Naive thymus-derived CD4-positive, alpha-beta T cell (primary cell): ENCODE measurements at regions of chr19 and their contacts with region 1.

Region 1: GRCh38 chr19:662962-663681 is at the start of gene RNF126:
- DNase-seq: peak; percentile 83 to 92 (median 88)
- ATAC-seq: peak; percentile 78
- H3K4me3 ChIP-seq: peak within 1 kb of the TSS; percentile 92
- H3K4me3 Mint-ChIP-seq: peak within 1 kb of the TSS; percentile 95 to 99 (median 98)
- H3K27ac ChIP-seq: peak within 1 kb of the TSS; percentile 96
- H3K27ac Mint-ChIP-seq: peak within 1 kb of the TSS; percentile 93 to 98 (median 97)
- H3K4me1 ChIP-seq: peaks cover 27 to 30% of the 10 kb centered on the region in 2 donors
- H3K4me1 Mint-ChIP-seq: peaks cover 20 to 40% (median 32%) of the 10 kb centered on the region in 7 donors
- H3K27me3 ChIP-seq: no peaks in the 10 kb centered on the region
- H3K27me3 Mint-ChIP-seq: peaks cover 0 to 2% (median 0%) of the 10 kb centered on the region in 5 donors
- total RNA-seq, gene RNF126: 75.1 to 110 (median 101) TPM

Region 2: DNA sequence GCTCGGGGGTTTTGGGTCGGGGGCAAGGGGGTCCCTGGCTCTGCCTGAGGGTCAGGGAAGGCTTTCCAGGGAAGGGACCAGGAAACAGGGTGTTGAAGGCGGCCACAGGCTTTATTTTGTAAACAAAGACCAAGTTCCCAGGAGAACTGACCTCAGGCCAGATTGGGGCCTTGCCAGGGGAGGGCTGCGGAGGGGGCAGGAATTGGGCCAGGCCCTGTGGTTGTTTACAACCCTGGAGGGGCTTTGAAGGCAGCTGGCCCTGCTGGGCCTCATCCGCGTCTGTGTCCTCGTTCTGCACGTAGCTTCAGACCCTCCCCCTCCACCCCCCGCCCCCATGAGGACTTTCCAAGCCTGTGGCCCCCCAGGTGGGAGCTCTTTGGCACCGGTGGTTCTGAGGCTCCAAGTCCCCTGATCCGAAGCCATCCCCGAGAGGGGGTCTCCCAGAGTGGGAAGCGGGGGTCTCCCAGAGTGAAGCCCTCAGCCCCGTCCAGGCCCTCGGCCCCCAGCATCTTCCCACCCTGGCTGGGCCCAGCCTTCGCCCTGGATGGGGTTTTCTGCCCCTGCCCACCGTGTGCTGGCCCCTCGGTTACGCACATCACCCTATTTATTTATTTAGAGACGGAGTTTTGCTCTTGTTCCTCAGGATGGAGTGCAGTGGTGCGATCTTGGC is 104.2 kb before region 1 on chr19:
- CTCF ChIA-PET with region 1: no interaction called
- POLR2A ChIA-PET with region 1: no interaction called
- intact Hi-C with region 1: no loop called
- DNase-seq: no peak
- ATAC-seq: no peak
- H3K4me3 ChIP-seq: no peak overlapping the region
- H3K4me3 Mint-ChIP-seq: no peak overlapping the region
- H3K27ac ChIP-seq: no peak overlapping the region
- H3K27ac Mint-ChIP-seq: no peak overlapping the region
- H3K4me1 ChIP-seq: no peaks in the 10 kb centered on the region
- H3K4me1 Mint-ChIP-seq: peaks cover 0 to 4% (median 0%) of the 10 kb centered on the region in 7 donors
- H3K27me3 ChIP-seq: no peaks in the 10 kb centered on the region
- H3K27me3 Mint-ChIP-seq: no peaks in the 10 kb centered on the region

Region 3: DNA sequence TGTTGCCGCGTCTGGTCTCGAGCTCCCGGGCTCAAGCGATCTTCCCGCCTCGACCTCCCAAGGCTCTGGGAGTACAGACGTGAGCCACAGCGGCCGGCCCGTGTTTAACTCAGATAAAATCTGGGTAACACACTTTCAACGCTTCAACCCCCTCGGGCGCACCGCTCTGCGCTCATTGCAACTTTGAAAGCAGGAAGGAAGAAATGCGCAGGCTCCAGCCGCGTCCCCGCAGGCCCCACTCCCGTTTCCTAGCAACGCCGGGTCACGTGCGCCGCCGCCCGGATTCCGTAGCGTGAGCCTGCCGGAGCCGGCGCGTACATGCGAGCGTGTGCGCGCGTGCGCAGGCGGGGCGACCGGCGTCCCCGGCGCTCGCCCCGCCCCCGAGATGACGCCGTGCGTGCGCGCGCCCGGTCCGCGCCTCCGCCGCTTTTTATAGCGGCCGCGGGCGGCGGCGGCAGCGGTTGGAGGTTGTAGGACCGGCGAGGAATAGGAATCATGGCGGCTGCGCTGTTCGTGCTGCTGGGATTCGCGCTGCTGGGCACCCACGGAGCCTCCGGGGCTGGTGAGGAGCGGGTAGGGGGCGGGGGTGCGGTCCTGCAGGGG is 90.9 kb before region 1 on chr19 and contains the start of gene BSG:
- CTCF ChIA-PET with region 1: no interaction called
- POLR2A ChIA-PET with region 1: interaction called, 3 read pairs
- intact Hi-C with region 1: loop called (anchors 1 to 5 kb)
- DNase-seq: peak; percentile 96 to 99 (median 99)
- ATAC-seq: peak; percentile 89
- H3K4me3 ChIP-seq: peak within 1 kb of the TSS; percentile 75
- H3K4me3 Mint-ChIP-seq: peak within 1 kb of the TSS; percentile 87 to 99 (median 96)
- H3K27ac ChIP-seq: peak within 1 kb of the TSS; percentile 93
- H3K27ac Mint-ChIP-seq: peak within 1 kb of the TSS; percentile 92 to 99 (median 96)
- H3K4me1 ChIP-seq: peaks cover 16 to 19% of the 10 kb centered on the region in 2 donors
- H3K4me1 Mint-ChIP-seq: peaks cover 12 to 49% (median 36%) of the 10 kb centered on the region in 7 donors
- H3K27me3 ChIP-seq: no peaks in the 10 kb centered on the region
- H3K27me3 Mint-ChIP-seq: peaks cover 0 to 4% (median 0%) of the 10 kb centered on the region in 5 donors
- total RNA-seq, gene BSG: 109 to 247 (median 120) TPM

Region 4: GRCh38 chr19:610801-611505 is 52.2 kb before region 1 on chr19:
- CTCF ChIA-PET with region 1: no interaction called
- POLR2A ChIA-PET with region 1: interaction called, 7 read pairs
- intact Hi-C with region 1: loop called (anchors 1 to 2 kb)
- DNase-seq: peak in 8 of 9 donors; percentile 55 to 75 (median 62)
- ATAC-seq: peak; percentile 72
- H3K4me3 ChIP-seq: peak overlapping the region; percentile 49
- H3K4me3 Mint-ChIP-seq: peak overlapping the region; percentile 83 to 97 (median 94)
- H3K27ac ChIP-seq: peak overlapping the region; percentile 75
- H3K27ac Mint-ChIP-seq: peak overlapping the region; percentile 81 to 98 (median 90)
- H3K4me1 ChIP-seq: peaks cover 12% of the 10 kb centered on the region in 2 donors
- H3K4me1 Mint-ChIP-seq: peaks cover 0 to 23% (median 17%) of the 10 kb centered on the region in 7 donors
- H3K27me3 ChIP-seq: no peaks in the 10 kb centered on the region
- H3K27me3 Mint-ChIP-seq: no peaks in the 10 kb centered on the region

Region 5: GRCh38 chr19:623974-624373 is 39.1 kb before region 1 on chr19:
- CTCF ChIA-PET with region 1: no interaction called
- POLR2A ChIA-PET with region 1: no interaction called
- intact Hi-C with region 1: no loop called
- DNase-seq: no peak
- ATAC-seq: no peak
- H3K4me3 ChIP-seq: no peak overlapping the region
- H3K4me3 Mint-ChIP-seq: no peak overlapping the region
- H3K27ac ChIP-seq: no peak overlapping the region
- H3K27ac Mint-ChIP-seq: no peak overlapping the region
- H3K4me1 ChIP-seq: no peaks in the 10 kb centered on the region
- H3K4me1 Mint-ChIP-seq: peaks cover 3 to 15% (median 6%) of the 10 kb centered on the region in 7 donors
- H3K27me3 ChIP-seq: no peaks in the 10 kb centered on the region
- H3K27me3 Mint-ChIP-seq: no peaks in the 10 kb centered on the region

Region 6: DNA sequence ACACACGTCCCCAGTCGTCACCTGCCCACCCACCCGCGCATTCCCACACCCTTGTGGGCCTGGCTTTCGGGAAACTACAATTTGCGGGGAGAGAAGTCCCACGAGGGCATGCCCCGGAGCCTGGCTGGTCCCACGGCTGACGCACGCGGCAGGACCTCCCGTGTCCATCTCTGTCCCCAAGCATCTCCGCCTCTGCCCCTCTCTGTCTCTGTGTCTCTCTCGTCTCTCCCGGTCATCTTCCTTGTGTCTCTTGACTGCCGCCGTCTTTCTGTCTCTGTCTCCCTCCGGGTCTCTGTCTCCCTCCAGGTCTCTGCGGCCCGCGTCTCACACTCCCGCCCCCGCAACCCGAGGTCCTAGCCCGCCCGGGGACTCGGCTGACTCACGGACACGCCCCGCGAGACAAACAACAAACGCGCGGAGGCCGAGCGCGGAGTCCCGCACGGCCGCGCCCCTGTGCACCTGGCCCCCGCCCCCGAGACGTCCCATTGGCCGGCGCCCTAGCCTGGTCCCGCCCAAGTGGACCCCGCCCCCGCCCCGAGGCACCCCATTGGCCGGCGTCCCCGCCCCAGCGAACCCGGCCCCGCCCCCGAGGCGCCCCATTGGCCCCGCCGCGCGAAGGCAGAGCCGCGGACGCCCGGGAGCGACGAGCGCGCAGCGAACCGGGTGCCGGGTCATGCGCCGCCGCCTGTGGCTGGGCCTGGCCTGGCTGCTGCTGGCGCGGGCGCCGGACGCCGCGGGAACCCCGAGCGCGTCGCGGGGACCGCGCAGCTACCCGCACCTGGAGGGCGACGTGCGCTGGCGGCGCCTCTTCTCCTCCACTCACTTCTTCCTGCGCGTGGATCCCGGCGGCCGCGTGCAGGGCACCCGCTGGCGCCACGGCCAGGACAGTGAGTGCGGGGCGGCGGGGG is 23.6 kb before region 1 on chr19 and contains the start of gene FGF22:
- CTCF ChIA-PET with region 1: interaction called, 4 read pairs
- POLR2A ChIA-PET with region 1: interaction called, 18 read pairs
- intact Hi-C with region 1: loop called (anchors 1 kb)
- DNase-seq: peak; percentile 84 to 95 (median 91)
- ATAC-seq: peak; percentile 97
- H3K4me3 ChIP-seq: peak within 1 kb of the TSS; percentile 55
- H3K4me3 Mint-ChIP-seq: peak within 1 kb of the TSS; percentile 76 to 92 (median 84)
- H3K27ac ChIP-seq: peak within 1 kb of the TSS; percentile 64
- H3K27ac Mint-ChIP-seq: peak within 1 kb of the TSS; percentile 78 to 95 (median 89)
- H3K4me1 ChIP-seq: peaks cover 10 to 15% of the 10 kb centered on the region in 2 donors
- H3K4me1 Mint-ChIP-seq: peaks cover 5 to 13% (median 6%) of the 10 kb centered on the region in 7 donors
- H3K27me3 ChIP-seq: no peaks in the 10 kb centered on the region
- H3K27me3 Mint-ChIP-seq: peaks cover 0 to 3% (median 0%) of the 10 kb centered on the region in 5 donors
- total RNA-seq, gene FGF22: 0.17 to 1.8 (median 0.95) TPM in 4 of 5 experiments, not detected in the other

Region 7: GRCh38 chr19:900302-901111 is 237.4 kb after region 1 on chr19:
- CTCF ChIA-PET with region 1: interaction called, 5 read pairs
- POLR2A ChIA-PET with region 1: no interaction called
- intact Hi-C with region 1: loop called in 1 of 2 experiments (anchors 10 kb)
- DNase-seq: peak in 1 of 9 donors; percentile 45
- ATAC-seq: peak; percentile 77
- H3K4me3 ChIP-seq: no peak overlapping the region
- H3K4me3 Mint-ChIP-seq: no peak overlapping the region
- H3K27ac ChIP-seq: peak overlapping the region; percentile 40
- H3K27ac Mint-ChIP-seq: peak overlapping the region in 6 of 9 donors; percentile 28 to 88 (median 63)
- H3K4me1 ChIP-seq: peaks cover 0 to 10% of the 10 kb centered on the region in 2 donors
- H3K4me1 Mint-ChIP-seq: peaks cover 6 to 37% (median 23%) of the 10 kb centered on the region in 7 donors
- H3K27me3 ChIP-seq: no peaks in the 10 kb centered on the region
- H3K27me3 Mint-ChIP-seq: no peaks in the 10 kb centered on the region